A549 (cell line): ENCODE measurements at regions of chr2 and their contacts with region 1.

Region 1: DNA sequence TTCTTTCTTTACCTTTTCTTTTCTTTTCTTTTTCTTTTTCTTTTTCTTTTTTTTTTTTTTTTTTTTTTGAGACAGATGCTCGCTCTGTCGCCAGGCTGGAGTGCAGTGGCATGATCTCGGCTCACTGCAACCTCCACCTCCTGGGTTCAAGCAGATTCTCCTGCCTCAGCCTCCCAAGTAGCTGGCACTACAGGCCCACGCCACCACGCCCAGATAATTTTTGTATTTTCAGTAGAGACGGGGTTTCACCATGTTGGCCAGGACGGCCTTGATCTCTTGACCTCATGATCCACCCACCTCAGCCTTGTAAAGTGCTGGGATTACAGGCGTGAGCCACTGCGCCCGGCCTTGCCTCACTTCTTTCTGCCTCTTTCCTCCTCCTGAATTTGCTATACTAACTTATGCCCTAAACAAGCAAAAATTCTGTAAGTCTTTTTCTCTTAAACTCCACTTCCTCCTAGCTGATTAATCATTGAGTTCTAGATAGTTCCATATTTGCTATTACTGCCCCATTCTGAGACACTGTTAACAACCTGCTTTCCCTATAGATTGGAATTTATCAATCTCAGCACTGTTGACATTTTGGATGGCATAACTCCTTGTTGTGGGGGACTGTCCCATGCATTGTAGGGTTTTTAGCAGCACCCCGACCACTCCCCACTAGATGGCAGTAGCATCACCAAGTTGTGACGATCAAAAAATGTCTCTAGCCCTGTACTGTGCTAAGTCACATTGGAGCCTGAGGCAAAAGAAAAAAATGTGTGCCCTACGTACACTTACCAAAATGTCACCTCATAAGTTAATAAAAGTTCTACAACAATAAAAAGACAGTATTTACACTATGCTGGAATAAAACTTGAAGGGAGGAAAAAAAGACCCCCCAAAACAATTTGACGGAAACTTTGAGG is 16.4 kb upstream of the THADA start:
- DNase-seq: peak; percentile 58 to 82
- ATAC-seq: peak; percentile 89 to 94
- H3K4me3 ChIP-seq: no peak overlapping the region
- H3K27ac ChIP-seq: peak overlapping the region; percentile 45 to 55; a peak in 5 of 6 replicates
- H3K4me1 ChIP-seq: peaks cover 6% of the 10 kb centered on the region; the same call in 1 of the 3 replicates
- CTCF ChIP-seq: peak; percentile 95
- EP300 ChIP-seq: no peak
- POLR2A ChIP-seq: no peak
- RAD21 ChIP-seq: peak; percentile 89 to 91

Region 2: GRCh38 chr2:43495727-43496126 is 116.5 kb before region 1 on chr2:
- CTCF ChIA-PET with region 1: no interaction called
- POLR2A ChIA-PET with region 1: no interaction called
- DNase-seq: no peak
- ATAC-seq: no peak
- H3K4me3 ChIP-seq: no peak overlapping the region
- H3K27ac ChIP-seq: no peak overlapping the region
- H3K4me1 ChIP-seq: no peaks in the 10 kb centered on the region
- CTCF ChIP-seq: no peak
- EP300 ChIP-seq: no peak
- POLR2A ChIP-seq: no peak
- RAD21 ChIP-seq: no peak

Region 3: DNA sequence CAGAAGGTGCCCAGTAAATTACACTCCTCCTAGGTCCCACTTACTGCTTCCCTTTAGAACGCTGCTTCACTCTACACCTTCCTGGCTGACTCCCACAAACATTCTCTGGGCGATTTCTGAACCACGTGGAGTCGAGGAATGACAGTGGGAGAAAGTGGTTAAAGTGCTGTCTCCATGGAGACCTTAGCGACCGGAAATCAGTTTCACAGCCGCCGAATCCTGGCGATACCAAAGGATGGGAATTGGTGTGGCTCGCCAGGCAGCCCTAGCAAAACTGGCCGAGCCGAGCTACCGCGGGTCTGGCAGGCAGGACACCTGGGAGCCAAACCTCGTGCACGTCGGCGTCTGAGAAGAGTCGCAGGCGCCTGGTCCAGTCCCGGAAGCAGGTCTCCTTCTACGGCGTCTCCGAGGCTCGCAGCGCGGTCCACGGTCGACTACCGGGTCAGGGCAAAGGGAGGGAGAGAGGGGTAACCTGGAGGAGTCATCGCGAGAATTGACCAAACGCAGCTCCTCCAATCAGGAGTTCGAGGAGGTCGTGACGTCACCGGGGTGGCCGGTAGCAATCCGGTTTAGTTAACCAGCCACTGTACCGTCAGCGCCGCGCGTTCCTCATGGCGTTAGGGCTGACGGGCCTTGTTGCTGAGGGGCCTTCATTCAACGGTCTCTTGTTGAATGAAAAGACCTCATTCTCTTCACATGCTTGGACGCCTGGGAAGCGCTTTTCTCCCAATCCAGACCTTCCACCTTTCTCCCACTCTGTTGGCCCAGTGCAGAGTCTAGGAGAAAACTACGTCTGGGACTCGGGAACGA is 16.4 kb before region 1 on chr2 and contains the start of gene THADA:
- CTCF ChIA-PET with region 1: interaction called, 107 read pairs
- POLR2A ChIA-PET with region 1: interaction called, 4 read pairs
- DNase-seq: peak; percentile 96 to 100
- ATAC-seq: peak; percentile 97 to 99
- H3K4me3 ChIP-seq: peak within 1 kb of the TSS; percentile 65
- H3K27ac ChIP-seq: peak within 1 kb of the TSS; percentile 90 to 93
- H3K4me1 ChIP-seq: peaks cover 19% of the 10 kb centered on the region
- CTCF ChIP-seq: no peak
- EP300 ChIP-seq: no peak
- POLR2A ChIP-seq: peak; percentile 97
- RAD21 ChIP-seq: no peak
- polyA plus RNA-seq, gene THADA: 37.9 and 51.8 TPM in 2 replicates

Region 4: DNA sequence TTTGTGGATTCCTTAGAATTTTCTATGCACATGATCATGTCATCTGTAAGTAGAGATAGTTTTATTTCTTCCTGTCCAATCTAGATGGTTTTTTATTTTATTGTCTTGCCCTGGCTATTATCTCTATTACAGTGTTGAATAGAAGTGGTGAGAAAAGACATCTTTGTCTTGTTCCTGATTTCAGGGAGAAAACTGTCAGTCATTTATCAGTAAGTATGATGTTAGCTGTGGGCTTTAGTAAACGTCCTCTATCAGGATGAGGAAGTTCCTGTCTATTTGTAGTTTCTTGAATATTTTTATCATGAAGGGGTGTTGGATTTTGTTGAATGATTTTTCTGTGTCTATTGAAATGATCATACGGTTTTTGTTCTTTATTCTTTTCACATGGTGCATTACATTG is 30.1 kb after region 1 on chr2:
- CTCF ChIA-PET with region 1: interaction called, 18 read pairs
- POLR2A ChIA-PET with region 1: no interaction called
- DNase-seq: no peak
- ATAC-seq: no peak
- H3K4me3 ChIP-seq: no peak overlapping the region
- H3K27ac ChIP-seq: no peak overlapping the region
- H3K4me1 ChIP-seq: no peaks in the 10 kb centered on the region
- CTCF ChIP-seq: no peak
- EP300 ChIP-seq: no peak
- POLR2A ChIP-seq: no peak
- RAD21 ChIP-seq: no peak

Region 5: GRCh38 chr2:43718530-43719124 is 106.4 kb after region 1 on chr2:
- CTCF ChIA-PET with region 1: no interaction called
- POLR2A ChIA-PET with region 1: no interaction called
- DNase-seq: no peak
- ATAC-seq: no peak
- H3K4me3 ChIP-seq: no peak overlapping the region
- H3K27ac ChIP-seq: no peak overlapping the region
- H3K4me1 ChIP-seq: no peaks in the 10 kb centered on the region
- CTCF ChIP-seq: no peak
- EP300 ChIP-seq: no peak
- POLR2A ChIP-seq: no peak
- RAD21 ChIP-seq: no peak

Region 6: DNA sequence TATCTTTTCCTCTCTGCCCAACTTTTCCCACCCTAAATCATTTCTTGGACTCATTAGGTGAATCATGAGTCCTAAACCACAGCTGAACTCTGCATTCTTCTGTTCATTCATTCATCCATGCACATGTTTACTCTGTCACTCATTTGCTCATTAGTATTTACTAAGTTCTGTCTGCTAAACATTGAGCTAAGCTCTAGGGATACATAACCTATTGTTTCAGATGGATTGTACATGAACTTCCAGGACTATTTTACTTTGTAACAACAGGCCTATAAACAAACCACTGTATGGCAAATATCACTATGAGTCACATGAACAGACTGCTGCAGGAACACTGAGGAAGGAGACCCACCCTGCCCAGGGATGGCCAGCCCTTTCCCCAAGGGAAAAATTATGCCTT is 147.0 kb after region 1 on chr2:
- CTCF ChIA-PET with region 1: no interaction called
- POLR2A ChIA-PET with region 1: no interaction called
- DNase-seq: peak; percentile 15 to 82
- ATAC-seq: peak; percentile 81 to 95
- H3K4me3 ChIP-seq: no peak overlapping the region
- H3K27ac ChIP-seq: peak overlapping the region; percentile 35 to 65
- H3K4me1 ChIP-seq: peaks cover 35% of the 10 kb centered on the region
- CTCF ChIP-seq: no peak
- EP300 ChIP-seq: no peak
- POLR2A ChIP-seq: no peak
- RAD21 ChIP-seq: no peak

Region 7: DNA sequence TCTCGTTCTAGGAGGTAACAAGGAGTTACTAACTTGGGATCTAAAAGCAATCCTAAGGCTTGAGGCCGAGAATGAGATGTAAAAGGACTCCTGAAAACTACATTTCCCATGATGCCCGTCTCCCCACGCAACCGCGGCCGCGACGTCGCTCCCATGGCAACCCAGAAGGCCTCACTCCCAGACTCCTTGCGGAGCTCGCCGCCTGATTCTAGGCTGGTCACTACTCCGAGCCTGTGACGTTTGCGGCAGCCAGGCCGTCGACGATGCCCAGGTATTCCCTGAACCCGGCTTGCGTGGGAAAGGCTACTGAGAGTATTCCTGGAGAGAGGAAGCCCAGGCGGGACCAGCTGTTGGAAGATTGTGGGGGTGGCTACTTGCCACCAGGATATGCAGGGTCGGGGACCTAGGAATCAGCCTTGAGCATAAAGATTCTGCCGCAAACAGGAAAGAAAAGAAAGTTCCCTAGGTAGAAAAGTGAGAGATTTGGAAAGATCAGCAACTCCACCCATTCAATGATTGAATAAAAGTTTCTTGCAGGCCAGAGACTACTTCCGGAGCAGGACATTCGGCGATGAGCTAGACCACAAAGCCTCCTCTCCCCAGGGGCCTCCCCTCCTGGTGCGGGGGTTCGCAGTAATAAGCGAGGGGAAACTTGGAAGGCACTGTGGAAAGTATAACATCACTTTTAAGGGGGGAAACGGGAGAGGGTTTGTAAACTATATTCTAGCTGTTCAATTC is 161.8 kb after region 1 on chr2 and contains the start of gene DYNC2LI1:
- CTCF ChIA-PET with region 1: interaction called, 14 read pairs
- POLR2A ChIA-PET with region 1: no interaction called
- DNase-seq: peak; percentile 94 to 96
- ATAC-seq: peak; percentile 99 to 100
- H3K4me3 ChIP-seq: peak within 1 kb of the TSS; percentile 65
- H3K27ac ChIP-seq: peak within 1 kb of the TSS; percentile 75 to 81
- H3K4me1 ChIP-seq: peaks cover 6% of the 10 kb centered on the region; the same call in 1 of the 3 replicates
- CTCF ChIP-seq: no peak
- EP300 ChIP-seq: no peak
- POLR2A ChIP-seq: peak; percentile 82
- RAD21 ChIP-seq: no peak; a peak in 2 of 5 replicates
- polyA plus RNA-seq, gene DYNC2LI1: 33.5 and 44.3 TPM in 2 replicates

Region 8: GRCh38 chr2:43898134-43898837 is 286.0 kb after region 1 on chr2:
- CTCF ChIA-PET with region 1: interaction called, 26 read pairs
- POLR2A ChIA-PET with region 1: no interaction called
- DNase-seq: peak; percentile 64 to 76
- ATAC-seq: peak; percentile 90 to 94
- H3K4me3 ChIP-seq: no peak overlapping the region
- H3K27ac ChIP-seq: 0 out of 6 replicates have a peak overlapping the region, but pooled peaks of 1 of the 2 experiments have one; percentile 1
- H3K4me1 ChIP-seq: peaks cover 28% of the 10 kb centered on the region
- CTCF ChIP-seq: peak; percentile 61
- EP300 ChIP-seq: no peak
- POLR2A ChIP-seq: no peak
- RAD21 ChIP-seq: peak in 1 of 2 experiments; percentile 47; a peak in 3 of 5 replicates